PC-9 (cell line): ENCODE measurements at regions of chr16 and their contacts with region 1.

Region 1: GRCh38 chr16:81444448-81445121 is at the start of gene CMIP:
- DNase-seq: peak in 1 of 2 experiments; percentile 86
- H3K4me3 ChIP-seq: peak within 1 kb of the TSS; percentile 92
- H3K27ac ChIP-seq: peak within 1 kb of the TSS; percentile 81
- H3K4me1 ChIP-seq: peaks cover 24% of the 10 kb centered on the region
- H3K27me3 ChIP-seq: no peaks in the 10 kb centered on the region
- CTCF ChIP-seq: no peak
- total RNA-seq, gene CMIP: 92.1 and 96.6 TPM in 2 replicates

Region 2: GRCh38 chr16:81429045-81429521 is 15.5 kb before region 1 on chr16:
- CTCF ChIA-PET with region 1: interaction called, 5 read pairs
- POLR2A ChIA-PET with region 1: interaction called, 16 read pairs
- intact Hi-C with region 1: no loop called
- DNase-seq: peak; percentile 44 to 52
- H3K4me3 ChIP-seq: no peak overlapping the region
- H3K27ac ChIP-seq: no peak overlapping the region
- H3K4me1 ChIP-seq: no peaks in the 10 kb centered on the region; the same call in 1 of the 2 replicates
- H3K27me3 ChIP-seq: no peaks in the 10 kb centered on the region
- CTCF ChIP-seq: peak; percentile 67

Region 3: DNA sequence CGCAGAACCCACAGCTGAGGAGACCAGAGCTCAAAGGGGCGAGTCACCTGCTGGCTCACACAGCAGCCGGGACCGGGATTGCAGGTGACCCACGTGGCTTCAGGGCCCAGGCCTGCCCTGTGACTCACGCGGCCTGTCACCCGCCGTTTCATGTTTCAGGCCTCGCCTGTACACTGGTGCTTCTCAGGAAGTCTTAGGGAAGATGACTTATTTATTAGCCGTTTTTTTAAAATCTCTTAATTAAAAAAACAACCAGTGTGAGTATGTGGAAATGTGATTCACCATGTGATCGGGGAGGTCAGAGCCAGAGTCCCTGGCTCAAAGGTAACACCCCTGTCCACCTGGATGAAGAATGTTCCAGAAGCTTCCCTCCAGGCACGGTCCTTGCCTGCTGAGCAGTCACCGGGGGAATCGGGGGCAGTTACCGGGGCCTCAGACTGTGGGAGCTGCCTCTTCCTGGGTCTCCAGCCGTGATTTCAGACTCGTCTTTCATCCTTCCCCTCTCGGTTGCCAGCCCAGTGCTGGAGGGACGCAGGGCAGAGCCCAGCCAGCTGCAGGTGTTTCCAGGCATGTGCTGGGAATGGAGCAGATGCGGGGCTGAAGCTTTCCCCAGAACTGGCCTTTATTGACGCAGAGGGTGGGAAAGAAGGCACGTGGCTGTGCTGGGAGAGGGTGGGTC is 49.3 kb after region 1 on chr16:
- CTCF ChIA-PET with region 1: no interaction called
- POLR2A ChIA-PET with region 1: interaction called, 3 read pairs
- intact Hi-C with region 1: loop called (anchors 1 kb)
- DNase-seq: peak; percentile 92 to 96
- H3K4me3 ChIP-seq: peak overlapping the region; percentile 28; the same call in 1 of the 2 replicates
- H3K27ac ChIP-seq: peak overlapping the region; percentile 91
- H3K4me1 ChIP-seq: peaks cover 42% of the 10 kb centered on the region
- H3K27me3 ChIP-seq: no peaks in the 10 kb centered on the region
- CTCF ChIP-seq: no peak

Region 4: DNA sequence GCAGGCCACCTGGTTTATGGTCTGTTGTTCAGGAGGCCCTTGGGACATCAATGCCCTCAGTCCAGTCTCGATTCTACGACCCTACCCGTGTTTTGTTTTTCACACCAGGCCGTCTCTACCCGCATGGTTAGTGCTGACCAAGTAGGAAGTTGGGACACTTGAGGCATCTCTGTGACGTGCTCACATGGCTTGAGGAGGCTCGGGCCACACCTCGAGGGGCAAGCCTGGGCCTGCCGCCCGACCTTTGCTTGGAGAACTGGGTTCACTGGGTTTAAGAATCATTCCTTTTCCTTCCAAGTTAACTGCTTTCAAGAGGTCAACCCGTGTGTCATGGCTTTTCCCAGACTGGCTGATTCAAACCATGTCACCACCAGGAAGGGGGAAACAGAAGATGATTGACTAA is 86.8 kb after region 1 on chr16:
- CTCF ChIA-PET with region 1: no interaction called
- POLR2A ChIA-PET with region 1: interaction called, 4 read pairs
- intact Hi-C with region 1: loop called (anchors 2 kb)
- DNase-seq: peak in 1 of 2 experiments; percentile 84
- H3K4me3 ChIP-seq: no peak overlapping the region
- H3K27ac ChIP-seq: no peak overlapping the region
- H3K4me1 ChIP-seq: peaks cover 19% of the 10 kb centered on the region
- H3K27me3 ChIP-seq: no peaks in the 10 kb centered on the region
- CTCF ChIP-seq: no peak

Region 5: DNA sequence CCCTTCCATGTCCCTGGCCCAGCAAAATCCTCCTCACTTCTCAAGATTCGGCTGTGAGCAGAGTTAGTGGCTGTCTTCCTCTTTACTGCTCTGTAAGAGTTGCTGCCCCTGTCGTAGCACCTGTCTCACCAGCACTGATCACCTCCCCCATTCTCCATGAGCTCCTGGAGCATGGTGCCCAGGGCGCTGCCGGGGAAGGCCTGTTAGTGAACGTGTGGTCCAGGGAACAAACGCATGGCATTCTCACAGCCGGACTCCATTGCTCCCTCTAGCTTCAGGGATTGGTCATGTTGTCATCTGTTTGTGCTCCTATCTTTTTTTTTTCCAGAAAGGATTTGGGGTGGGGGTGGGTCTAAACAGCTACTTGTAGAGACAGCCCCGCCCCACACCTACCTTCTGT is 141.2 kb after region 1 on chr16:
- CTCF ChIA-PET with region 1: no interaction called
- POLR2A ChIA-PET with region 1: no interaction called
- intact Hi-C with region 1: loop called (anchors 5 kb)
- DNase-seq: peak in 1 of 2 experiments; percentile 32
- H3K4me3 ChIP-seq: no peak overlapping the region
- H3K27ac ChIP-seq: peak overlapping the region; percentile 68
- H3K4me1 ChIP-seq: peaks cover 62% of the 10 kb centered on the region
- H3K27me3 ChIP-seq: no peaks in the 10 kb centered on the region
- CTCF ChIP-seq: peak; percentile 52

Region 6: GRCh38 chr16:81600901-81601428 is 156.4 kb after region 1 on chr16:
- CTCF ChIA-PET with region 1: no interaction called
- POLR2A ChIA-PET with region 1: no interaction called
- intact Hi-C with region 1: loop called (anchors 1 kb)
- DNase-seq: peak in 1 of 2 experiments; percentile 53
- H3K4me3 ChIP-seq: no peak overlapping the region
- H3K27ac ChIP-seq: no peak overlapping the region
- H3K4me1 ChIP-seq: peaks cover 17% of the 10 kb centered on the region
- H3K27me3 ChIP-seq: no peaks in the 10 kb centered on the region
- CTCF ChIP-seq: no peak

Region 7: DNA sequence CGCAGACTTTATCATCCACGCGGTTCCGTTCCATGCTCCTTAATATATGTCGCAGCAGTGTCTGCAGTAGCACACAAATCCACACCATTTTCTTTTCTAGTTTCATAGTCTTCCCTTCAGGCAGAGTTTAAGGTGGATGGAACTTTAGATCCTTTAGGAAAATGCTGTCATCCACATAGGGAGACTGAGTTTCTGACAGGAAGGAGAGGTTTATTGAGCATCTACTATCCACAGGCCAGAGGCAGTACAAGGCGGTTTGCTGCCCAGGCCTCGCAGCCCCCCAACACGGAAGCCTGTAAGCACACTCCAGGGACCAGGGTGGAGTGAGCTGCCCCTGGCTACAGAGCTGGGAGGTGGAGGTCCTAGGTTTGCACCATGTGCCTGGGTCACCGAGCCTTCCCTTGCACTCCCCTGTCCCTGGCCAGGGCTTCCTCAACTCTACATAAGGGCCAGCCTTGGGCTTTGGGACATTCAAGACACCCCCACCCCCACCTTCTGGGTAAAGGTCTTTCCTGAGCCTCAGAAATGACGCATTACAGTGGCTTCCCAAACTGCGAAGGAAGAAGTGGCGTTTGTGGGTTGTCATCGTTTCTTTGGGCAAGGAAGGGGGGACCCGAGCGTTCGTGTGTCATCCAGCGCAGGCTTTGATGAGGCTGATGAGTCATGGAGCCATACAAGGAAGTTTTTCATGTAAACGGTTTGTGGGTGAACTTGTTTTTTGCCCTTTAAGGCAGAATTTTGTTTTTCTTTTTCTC is 188.0 kb after region 1 on chr16:
- CTCF ChIA-PET with region 1: no interaction called
- POLR2A ChIA-PET with region 1: no interaction called
- intact Hi-C with region 1: loop called (anchors 5 kb)
- DNase-seq: peak; percentile 79 to 95
- H3K4me3 ChIP-seq: peak overlapping the region; percentile 36; the same call in 1 of the 2 replicates
- H3K27ac ChIP-seq: peak overlapping the region; percentile 90
- H3K4me1 ChIP-seq: peaks cover 49% of the 10 kb centered on the region
- H3K27me3 ChIP-seq: no peaks in the 10 kb centered on the region
- CTCF ChIP-seq: no peak